ENCODE measurements at regions of chr18 and their contacts with region 1.

Region 1: DNA sequence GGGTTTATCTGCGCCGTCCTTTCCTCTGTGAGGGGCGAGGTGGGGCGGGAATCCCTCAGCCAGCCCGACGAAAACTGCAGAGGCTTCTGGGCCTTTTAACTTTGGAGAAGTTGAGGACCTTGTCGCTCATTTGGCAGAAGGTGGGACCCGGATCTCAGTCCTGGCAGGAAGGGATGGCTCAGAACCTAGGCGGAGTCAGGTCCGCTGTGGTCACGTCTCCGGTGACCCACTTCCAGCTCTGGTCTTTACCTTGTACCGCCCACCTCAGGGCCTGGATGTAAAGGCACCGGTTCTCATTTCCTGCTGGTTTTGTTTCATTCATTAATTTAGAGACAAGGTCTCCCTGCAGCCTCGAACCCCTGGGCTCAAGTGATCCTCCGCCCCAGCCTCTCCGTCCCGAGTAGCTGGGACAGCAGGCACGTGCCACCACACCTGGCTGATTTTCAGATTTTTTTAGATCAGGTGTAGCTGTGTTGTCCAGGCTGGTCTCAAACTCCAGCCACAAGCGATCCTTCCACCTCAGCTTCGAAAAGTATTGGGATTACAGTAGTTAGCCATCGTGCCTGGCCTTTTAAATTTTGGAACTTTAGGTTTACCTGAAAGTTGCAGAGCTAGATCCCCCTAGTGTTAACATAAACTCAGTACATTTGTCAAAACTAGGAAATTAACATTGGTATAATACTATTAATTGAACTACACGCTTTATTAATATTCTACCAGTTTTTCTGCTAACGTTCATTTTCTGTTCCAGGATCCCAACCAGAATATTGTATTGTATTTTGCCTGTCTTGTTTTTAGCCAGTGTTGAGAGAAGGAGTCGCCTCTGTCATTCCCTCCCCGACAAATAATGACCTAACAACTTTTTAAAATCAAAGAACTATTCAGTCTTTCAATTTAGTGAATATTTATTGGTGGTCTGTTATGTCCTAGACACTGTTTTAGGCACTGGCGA is 852 bp downstream of the POLI start:
- DNase-seq: peak in 12 of 14 experiments; percentile 16 to 78 (median 32)
- ATAC-seq: peak; percentile 27
- H3K4me3 ChIP-seq: peak overlapping the region; percentile 83
- H3K4me3 Mint-ChIP-seq: peak overlapping the region; percentile 90
- H3K27ac ChIP-seq: peak overlapping the region; percentile 92
- H3K27ac Mint-ChIP-seq: peak overlapping the region; percentile 85
- H3K4me1 ChIP-seq: peaks cover 16% of the 10 kb centered on the region
- H3K4me1 Mint-ChIP-seq: peaks cover 17% of the 10 kb centered on the region
- H3K27me3 ChIP-seq: no peaks in the 10 kb centered on the region
- H3K27me3 Mint-ChIP-seq: no peaks in the 10 kb centered on the region
- CTCF ChIP-seq: peak; percentile 72

Region 2: DNA sequence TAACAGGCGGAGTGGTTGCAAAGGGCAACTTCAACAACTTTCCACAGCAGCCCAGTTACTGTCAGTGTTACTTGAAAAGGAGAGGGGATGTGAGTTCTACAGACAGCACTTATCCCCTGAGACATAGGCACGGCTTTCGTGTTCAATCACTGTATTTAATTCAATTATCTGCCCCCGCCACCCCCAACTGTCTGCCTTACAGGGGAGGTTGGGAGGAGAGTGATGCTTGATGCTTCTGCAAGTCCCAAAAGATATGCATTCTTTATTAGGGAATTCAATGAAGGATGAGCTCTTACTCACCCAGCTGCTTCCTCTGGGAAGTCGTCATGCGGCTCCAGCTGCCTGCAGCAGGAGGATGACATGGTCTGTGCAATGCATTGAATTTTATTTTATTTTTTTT is 1290.3 kb before region 1 on chr18:
- CTCF ChIA-PET with region 1: no interaction called
- POLR2A ChIA-PET with region 1: no interaction called
- intact Hi-C with region 1: no loop called
- DNase-seq: no peak
- ATAC-seq: no peak
- H3K4me3 ChIP-seq: no peak overlapping the region
- H3K4me3 Mint-ChIP-seq: no peak overlapping the region
- H3K27ac ChIP-seq: no peak overlapping the region
- H3K27ac Mint-ChIP-seq: no peak overlapping the region
- H3K4me1 ChIP-seq: no peaks in the 10 kb centered on the region
- H3K4me1 Mint-ChIP-seq: no peaks in the 10 kb centered on the region
- H3K27me3 ChIP-seq: no peaks in the 10 kb centered on the region
- H3K27me3 Mint-ChIP-seq: no peaks in the 10 kb centered on the region
- CTCF ChIP-seq: no peak

Region 3: GRCh38 chr18:53567929-53568574 is 702.1 kb before region 1 on chr18:
- CTCF ChIA-PET with region 1: no interaction called
- POLR2A ChIA-PET with region 1: no interaction called
- intact Hi-C with region 1: loop called in 1 of 2 experiments (anchors 10 kb)
- DNase-seq: peak in 3 of 14 experiments; percentile 13 to 28 (median 25)
- ATAC-seq: no peak
- H3K4me3 ChIP-seq: no peak overlapping the region
- H3K4me3 Mint-ChIP-seq: no peak overlapping the region
- H3K27ac ChIP-seq: no peak overlapping the region
- H3K27ac Mint-ChIP-seq: no peak overlapping the region
- H3K4me1 ChIP-seq: no peaks in the 10 kb centered on the region
- H3K4me1 Mint-ChIP-seq: no peaks in the 10 kb centered on the region
- H3K27me3 ChIP-seq: no peaks in the 10 kb centered on the region
- H3K27me3 Mint-ChIP-seq: no peaks in the 10 kb centered on the region
- CTCF ChIP-seq: peak; percentile 44

Region 4: GRCh38 chr18:54162431-54162830 is 107.7 kb before region 1 on chr18:
- CTCF ChIA-PET with region 1: no interaction called
- POLR2A ChIA-PET with region 1: no interaction called
- intact Hi-C with region 1: loop called in 1 of 2 experiments (anchors 10 kb)
- DNase-seq: no peak
- ATAC-seq: no peak
- H3K4me3 ChIP-seq: no peak overlapping the region
- H3K4me3 Mint-ChIP-seq: no peak overlapping the region
- H3K27ac ChIP-seq: no peak overlapping the region
- H3K27ac Mint-ChIP-seq: no peak overlapping the region
- H3K4me1 ChIP-seq: no peaks in the 10 kb centered on the region
- H3K4me1 Mint-ChIP-seq: no peaks in the 10 kb centered on the region
- H3K27me3 ChIP-seq: no peaks in the 10 kb centered on the region
- H3K27me3 Mint-ChIP-seq: no peaks in the 10 kb centered on the region
- CTCF ChIP-seq: no peak

Region 5: DNA sequence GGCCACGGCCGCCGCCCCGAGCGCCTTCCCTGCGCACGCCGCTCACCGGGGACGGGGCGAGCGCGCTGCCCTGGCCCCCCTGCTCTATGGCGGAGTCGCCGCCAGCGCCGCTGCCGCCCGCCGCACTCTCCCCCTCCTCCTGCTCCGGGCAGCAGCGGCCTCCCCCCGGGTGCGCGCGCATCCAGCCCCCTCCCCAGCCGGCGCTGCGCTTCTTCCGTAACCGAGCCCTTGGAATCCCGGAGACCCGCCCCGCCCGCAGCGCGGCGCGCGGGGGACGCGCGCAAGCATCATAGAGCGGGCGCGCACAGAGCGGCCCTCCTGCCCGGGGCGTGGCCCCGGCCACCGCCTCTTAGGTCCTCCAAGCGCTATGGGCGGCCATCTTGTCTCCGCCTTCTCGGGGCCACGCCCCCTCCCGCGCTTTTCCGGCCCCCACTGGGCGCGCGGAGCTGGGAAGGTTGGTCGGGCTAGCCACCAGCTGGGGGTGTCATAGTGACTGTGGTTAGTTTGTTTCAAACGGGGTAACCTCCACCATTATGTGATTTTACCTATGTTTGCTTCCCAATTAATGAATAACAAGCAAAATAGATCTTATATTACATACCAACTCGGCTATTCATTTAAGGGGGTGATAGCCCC is 45.7 kb before region 1 on chr18 and contains the start of gene MBD2:
- CTCF ChIA-PET with region 1: interaction called, 63 read pairs
- POLR2A ChIA-PET with region 1: interaction called, 32 read pairs
- intact Hi-C with region 1: loop called (anchors 1 kb)
- DNase-seq: peak; percentile 82 to 97 (median 90)
- ATAC-seq: peak; percentile 83
- H3K4me3 ChIP-seq: peak within 1 kb of the TSS; percentile 57
- H3K4me3 Mint-ChIP-seq: peak within 1 kb of the TSS; percentile 99
- H3K27ac ChIP-seq: peak within 1 kb of the TSS; percentile 55 to 76
- H3K27ac Mint-ChIP-seq: peak within 1 kb of the TSS; percentile 96
- H3K4me1 ChIP-seq: peaks cover 33% of the 10 kb centered on the region
- H3K4me1 Mint-ChIP-seq: peaks cover 44% of the 10 kb centered on the region
- H3K27me3 ChIP-seq: no peaks in the 10 kb centered on the region
- H3K27me3 Mint-ChIP-seq: no peaks in the 10 kb centered on the region
- CTCF ChIP-seq: no peak
- total RNA-seq, gene MBD2: 70.9 to 73.3 TPM

Region 6: DNA sequence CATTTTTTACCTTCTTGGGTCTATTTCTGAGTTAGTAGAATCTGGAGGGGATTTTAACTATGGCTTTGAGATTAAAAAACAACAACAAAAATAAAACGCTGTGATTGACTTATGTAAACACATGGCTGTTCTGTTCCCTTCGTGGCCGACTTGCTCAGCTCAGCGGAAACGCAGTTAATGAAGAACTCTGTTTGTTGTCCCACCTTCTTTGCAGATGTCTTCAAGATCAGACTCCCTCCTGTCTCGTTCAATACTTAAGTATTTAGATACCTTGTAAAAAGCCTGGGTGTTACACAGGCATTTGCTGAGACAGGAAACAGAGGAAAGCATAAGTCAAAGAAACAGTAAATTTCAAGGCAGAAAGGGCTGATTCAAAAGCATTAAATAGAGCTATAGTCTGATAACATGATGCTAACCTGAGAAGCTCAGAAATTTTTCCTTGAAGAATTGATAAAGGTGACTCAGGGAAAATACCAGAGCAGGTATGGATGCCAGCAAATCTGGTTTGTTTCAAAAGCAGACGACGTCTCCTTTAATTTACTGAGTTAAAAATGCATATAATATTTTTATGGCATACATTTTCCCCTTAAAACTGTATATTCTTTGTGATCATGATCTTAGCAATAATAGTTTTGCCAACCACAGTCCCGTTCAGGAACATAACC is 22.5 kb before region 1 on chr18:
- CTCF ChIA-PET with region 1: no interaction called
- POLR2A ChIA-PET with region 1: interaction called, 19 read pairs
- intact Hi-C with region 1: no loop called
- DNase-seq: peak in 2 of 14 experiments; percentile 14 to 17
- ATAC-seq: peak; percentile 35
- H3K4me3 ChIP-seq: no peak overlapping the region
- H3K4me3 Mint-ChIP-seq: peak overlapping the region; percentile 52
- H3K27ac ChIP-seq: peak overlapping the region; percentile 15 to 73
- H3K27ac Mint-ChIP-seq: peak overlapping the region; percentile 85
- H3K4me1 ChIP-seq: peaks cover 8% of the 10 kb centered on the region
- H3K4me1 Mint-ChIP-seq: peaks cover 28% of the 10 kb centered on the region
- H3K27me3 ChIP-seq: no peaks in the 10 kb centered on the region
- H3K27me3 Mint-ChIP-seq: no peaks in the 10 kb centered on the region
- CTCF ChIP-seq: no peak

Region 7: DNA sequence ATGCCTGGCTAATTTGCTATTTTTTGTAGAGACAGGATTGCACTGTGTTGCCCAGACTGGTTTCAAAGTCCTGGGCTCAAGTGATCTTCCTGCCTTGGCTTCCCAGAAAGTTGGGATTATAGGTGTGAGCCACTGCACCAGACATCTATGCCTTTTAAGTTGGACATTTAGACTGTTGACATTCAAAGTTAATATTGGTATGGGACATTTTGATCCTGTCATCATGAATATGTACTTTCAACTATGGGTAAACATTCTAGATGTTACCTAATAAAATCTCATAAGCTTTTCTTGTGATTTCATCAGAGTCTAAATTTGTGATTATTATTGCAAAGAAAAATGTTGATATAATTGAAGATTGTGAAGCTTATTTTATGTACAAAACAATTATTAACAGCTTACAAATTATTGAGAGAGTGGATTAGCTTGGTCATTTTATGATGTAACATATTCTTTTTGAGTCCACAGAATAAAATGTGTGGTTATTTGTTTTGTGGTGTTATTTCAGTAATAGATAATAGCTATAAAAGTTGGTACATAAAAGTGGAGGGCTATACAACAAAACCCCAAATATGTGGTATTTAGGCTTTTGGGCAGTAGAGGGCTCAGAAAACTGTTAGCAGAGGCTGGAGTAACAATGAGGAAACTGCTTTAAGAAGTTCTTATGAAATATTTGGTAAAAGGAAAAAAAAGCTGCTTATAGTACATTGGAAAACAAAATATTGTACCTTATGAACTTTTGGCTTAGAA is 46.1 kb after region 1 on chr18:
- CTCF ChIA-PET with region 1: no interaction called
- POLR2A ChIA-PET with region 1: no interaction called
- intact Hi-C with region 1: no loop called
- DNase-seq: no peak
- ATAC-seq: no peak
- H3K4me3 ChIP-seq: no peak overlapping the region
- H3K4me3 Mint-ChIP-seq: no peak overlapping the region
- H3K27ac ChIP-seq: no peak overlapping the region
- H3K27ac Mint-ChIP-seq: no peak overlapping the region
- H3K4me1 ChIP-seq: no peaks in the 10 kb centered on the region
- H3K4me1 Mint-ChIP-seq: no peaks in the 10 kb centered on the region
- H3K27me3 ChIP-seq: no peaks in the 10 kb centered on the region
- H3K27me3 Mint-ChIP-seq: peaks cover 19% of the 10 kb centered on the region
- CTCF ChIP-seq: no peak

Region 8: DNA sequence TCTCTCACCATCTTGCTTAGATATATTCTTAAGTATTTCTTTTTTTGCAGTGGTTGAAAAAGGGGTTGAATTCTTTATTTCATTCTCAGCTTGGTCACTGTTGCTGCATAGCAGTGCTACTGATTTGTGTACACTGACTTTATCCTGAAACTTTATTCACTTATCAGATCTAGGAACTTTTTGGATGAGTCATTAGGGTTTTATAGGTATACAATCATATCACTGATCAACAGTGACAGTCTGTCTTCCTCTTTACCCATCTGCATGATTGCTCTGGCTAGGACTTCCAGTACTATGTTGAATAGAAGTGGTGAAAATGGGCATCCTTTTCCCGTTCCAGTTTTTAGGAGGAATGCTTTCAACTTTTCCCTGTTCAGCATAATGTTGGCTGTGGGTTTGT is 81.0 kb after region 1 on chr18:
- CTCF ChIA-PET with region 1: no interaction called
- POLR2A ChIA-PET with region 1: no interaction called
- intact Hi-C with region 1: loop called in 1 of 2 experiments (anchors 5 kb)
- DNase-seq: no peak
- ATAC-seq: no peak
- H3K4me3 ChIP-seq: no peak overlapping the region
- H3K4me3 Mint-ChIP-seq: no peak overlapping the region
- H3K27ac ChIP-seq: no peak overlapping the region
- H3K27ac Mint-ChIP-seq: no peak overlapping the region
- H3K4me1 ChIP-seq: no peaks in the 10 kb centered on the region
- H3K4me1 Mint-ChIP-seq: no peaks in the 10 kb centered on the region
- H3K27me3 ChIP-seq: peaks cover 0 to 15% of the 10 kb centered on the region in 2 experiments
- H3K27me3 Mint-ChIP-seq: peaks cover 26% of the 10 kb centered on the region
- CTCF ChIP-seq: no peak

Region 9: DNA sequence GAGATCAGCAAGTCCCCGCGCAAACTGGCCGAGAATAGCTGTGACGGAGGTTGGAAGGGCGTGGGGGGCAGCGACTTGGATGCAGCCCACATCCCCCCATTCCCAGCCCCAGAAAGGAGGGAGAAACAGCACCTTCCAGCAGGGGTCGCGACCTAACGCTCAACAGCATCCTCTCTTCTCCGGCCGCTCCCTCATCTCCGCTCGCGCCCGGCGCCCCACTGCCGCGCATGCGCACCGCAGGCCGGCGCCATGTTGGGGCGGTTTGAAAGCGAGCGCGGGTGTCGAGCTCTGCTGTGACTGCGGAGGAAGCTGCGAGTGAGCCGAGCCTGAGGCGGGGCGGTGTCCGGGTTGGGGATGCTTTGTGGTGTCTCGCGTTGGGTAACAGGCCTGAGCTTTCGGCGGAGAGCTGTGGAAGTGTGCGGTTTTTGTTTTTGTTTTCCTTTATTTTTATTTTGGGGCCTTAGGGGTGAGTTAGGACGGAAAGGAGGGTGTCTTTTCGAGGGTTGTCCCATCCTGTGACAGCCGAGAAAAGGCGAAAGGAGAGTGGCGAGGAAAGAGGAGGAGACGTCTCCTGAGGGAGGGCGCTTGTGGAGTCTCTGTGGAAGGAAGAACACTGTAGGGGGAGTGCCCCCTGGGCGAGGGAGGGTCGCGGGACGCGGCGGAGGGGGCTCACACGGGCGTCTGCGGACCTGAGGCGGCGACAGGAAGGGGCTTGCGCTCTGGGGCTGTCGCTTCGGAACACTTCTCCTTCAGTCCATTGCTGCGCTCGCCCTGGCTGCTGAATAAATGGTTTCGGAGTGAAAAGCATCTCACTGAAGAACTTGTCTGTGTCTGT is 87.7 kb after region 1 on chr18 and contains the starts of genes C18orf54 and STARD6:
- CTCF ChIA-PET with region 1: interaction called, 11 read pairs
- POLR2A ChIA-PET with region 1: interaction called, 13 read pairs
- intact Hi-C with region 1: loop called in 1 of 2 experiments (anchors 5 kb)
- DNase-seq: peak; percentile 77 to 97 (median 88)
- ATAC-seq: peak; percentile 93
- H3K4me3 ChIP-seq: peak within 1 kb of the TSS; percentile 81
- H3K4me3 Mint-ChIP-seq: peak within 1 kb of the TSS; percentile 98
- H3K27ac ChIP-seq: peak within 1 kb of the TSS in 1 of 2 donors; percentile 65
- H3K27ac Mint-ChIP-seq: peak within 1 kb of the TSS; percentile 83
- H3K4me1 ChIP-seq: peaks cover 13% of the 10 kb centered on the region
- H3K4me1 Mint-ChIP-seq: peaks cover 23% of the 10 kb centered on the region
- H3K27me3 ChIP-seq: no peaks in the 10 kb centered on the region
- H3K27me3 Mint-ChIP-seq: no peaks in the 10 kb centered on the region
- CTCF ChIP-seq: peak; percentile 63
- total RNA-seq, gene C18orf54: 0.44 to 0.47 TPM
- total RNA-seq, gene STARD6: not detected